Heart right ventricle (tissue), 16 donors: ENCODE measurements at regions of chr2 and their contacts with region 1.

Region 1: DNA sequence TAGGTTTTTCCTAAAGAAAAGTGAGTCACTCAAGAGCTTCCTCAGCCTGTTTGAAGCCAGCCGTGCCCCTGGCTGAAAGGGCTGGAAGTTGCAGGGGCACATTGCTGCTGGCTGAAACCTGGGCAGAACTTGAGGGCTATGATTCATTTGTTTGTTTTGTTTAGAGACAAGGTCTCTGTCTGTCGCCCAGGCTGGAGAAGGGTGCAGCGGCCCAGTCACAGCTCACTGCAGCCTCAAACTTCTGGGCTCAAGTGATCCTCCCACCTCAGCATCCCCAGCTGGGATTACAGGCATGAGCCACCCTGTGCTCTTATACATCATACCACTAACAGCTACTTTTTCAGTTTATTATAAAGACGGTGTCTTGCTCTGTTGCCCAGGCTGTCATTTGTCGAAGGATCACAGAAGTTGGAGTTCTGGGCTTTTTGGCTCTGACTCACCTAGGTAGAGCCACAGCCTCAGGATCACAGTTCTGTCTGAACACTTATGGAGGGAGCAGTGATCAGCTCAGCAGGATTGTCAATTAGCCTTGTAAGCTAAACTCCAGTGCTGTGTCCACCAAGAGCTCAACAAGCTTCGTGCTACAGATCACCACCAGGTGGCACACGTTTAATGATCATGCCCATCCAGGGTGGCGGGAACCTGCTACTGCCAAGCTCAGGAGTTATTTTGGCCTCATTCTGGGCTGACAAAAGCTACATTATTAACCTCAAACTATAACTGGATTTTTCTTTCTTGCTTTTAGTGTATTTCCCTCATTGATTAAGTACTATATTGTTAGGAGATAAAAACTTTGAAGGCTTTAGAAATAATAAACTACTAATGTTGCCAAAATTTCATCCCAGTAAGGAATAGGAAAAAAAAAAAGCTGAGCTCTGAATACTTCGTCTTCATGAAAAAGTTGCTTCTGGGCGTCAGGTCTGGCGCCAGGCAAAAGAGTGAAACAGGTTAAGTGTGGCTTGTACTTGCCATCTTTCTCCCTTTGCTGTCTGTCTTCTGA is 57.9 kb downstream of the ARHGEF33 start:
- DNase-seq: peak; percentile 25 to 63
- ATAC-seq: peak in 7 of 8 donors; percentile 51 to 80 (median 71)
- H3K4me3 ChIP-seq: no peak overlapping the region
- H3K27ac ChIP-seq: no peak overlapping the region
- H3K4me1 ChIP-seq: peaks cover 0 to 4% (median 0%) of the 10 kb centered on the region in 9 donors
- H3K27me3 ChIP-seq: no peaks in the 10 kb centered on the region
- CTCF ChIP-seq: peak; percentile 36 to 77 (median 66)

Region 2: DNA sequence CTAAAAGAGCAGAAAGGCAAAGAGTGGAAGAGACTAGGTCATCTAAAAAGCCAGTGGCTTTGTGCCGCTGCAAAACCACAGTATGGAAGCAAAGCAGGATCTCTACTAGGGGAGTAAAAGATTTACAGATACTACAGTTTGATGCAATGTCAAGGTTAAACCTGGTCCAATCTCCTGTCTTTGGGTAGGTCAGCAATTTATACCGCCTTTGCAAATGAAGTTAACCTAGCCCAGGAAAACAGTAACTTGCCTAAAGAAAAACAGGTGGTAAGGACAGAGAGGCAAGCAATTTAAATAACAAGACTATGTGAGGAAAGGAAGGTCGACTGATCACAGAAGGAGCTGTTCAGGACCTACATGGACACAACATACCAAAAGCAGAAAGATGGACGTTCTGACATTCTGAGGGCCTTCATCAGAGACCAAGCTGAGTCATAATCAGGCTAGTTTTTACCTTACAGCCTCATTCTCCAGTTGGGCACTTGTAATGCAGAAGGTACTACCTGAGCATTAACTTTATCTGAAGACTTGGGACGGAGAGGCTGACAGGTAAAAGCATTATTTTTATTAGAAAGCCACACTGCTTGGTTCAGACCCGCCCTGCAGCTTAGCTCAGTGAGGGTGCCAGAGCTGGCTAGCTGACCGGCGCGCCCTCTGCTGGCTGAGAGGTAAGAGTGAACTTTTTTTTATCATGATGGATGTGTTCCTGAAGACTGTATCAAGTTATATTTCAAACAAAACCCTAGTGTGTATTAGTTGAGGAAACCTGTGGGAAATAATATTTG is 280.3 kb after region 1 on chr2:
- intact Hi-C with region 1: loop called in 8 of 10 experiments (anchors 2 to 10 kb)
- DNase-seq: peak; percentile 76 to 81
- ATAC-seq: peak; percentile 80 to 92 (median 88)
- H3K4me3 ChIP-seq: peak overlapping the region in 7 of 10 donors; percentile 7 to 40 (median 31)
- H3K27ac ChIP-seq: no peak overlapping the region
- H3K4me1 ChIP-seq: peaks cover 0 to 23% (median 15%) of the 10 kb centered on the region in 9 donors
- H3K27me3 ChIP-seq: no peaks in the 10 kb centered on the region
- CTCF ChIP-seq: peak; percentile 83 to 96 (median 90)

Region 3: DNA sequence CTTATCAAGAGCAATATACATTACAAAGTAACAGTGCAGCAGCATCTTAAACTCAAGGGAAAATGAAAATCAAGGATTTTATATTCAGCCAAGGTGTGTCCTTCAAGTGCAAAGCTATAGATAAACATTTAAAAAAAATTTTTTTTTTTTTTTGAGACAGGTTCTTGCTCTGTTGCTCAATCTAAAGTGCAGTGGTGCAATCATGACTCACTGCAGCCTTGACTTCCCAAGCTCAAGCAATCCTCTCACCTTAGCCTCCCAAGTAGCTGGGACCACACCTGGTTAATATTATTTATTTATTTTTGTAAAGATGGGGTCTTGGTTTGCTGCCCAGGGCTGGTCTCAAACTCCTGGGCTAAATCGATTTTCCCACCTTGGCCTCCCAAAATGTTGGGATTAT is 287.2 kb after region 1 on chr2:
- intact Hi-C with region 1: loop called in 8 of 10 experiments (anchors 2 to 10 kb)
- DNase-seq: no peak
- ATAC-seq: no peak
- H3K4me3 ChIP-seq: no peak overlapping the region
- H3K27ac ChIP-seq: no peak overlapping the region
- H3K4me1 ChIP-seq: peaks cover 0 to 5% (median 0%) of the 10 kb centered on the region in 9 donors
- H3K27me3 ChIP-seq: no peaks in the 10 kb centered on the region
- CTCF ChIP-seq: no peak